Caco-2 (cell line): ENCODE measurements at regions of chr17 and their contacts with region 1.

Region 1: DNA sequence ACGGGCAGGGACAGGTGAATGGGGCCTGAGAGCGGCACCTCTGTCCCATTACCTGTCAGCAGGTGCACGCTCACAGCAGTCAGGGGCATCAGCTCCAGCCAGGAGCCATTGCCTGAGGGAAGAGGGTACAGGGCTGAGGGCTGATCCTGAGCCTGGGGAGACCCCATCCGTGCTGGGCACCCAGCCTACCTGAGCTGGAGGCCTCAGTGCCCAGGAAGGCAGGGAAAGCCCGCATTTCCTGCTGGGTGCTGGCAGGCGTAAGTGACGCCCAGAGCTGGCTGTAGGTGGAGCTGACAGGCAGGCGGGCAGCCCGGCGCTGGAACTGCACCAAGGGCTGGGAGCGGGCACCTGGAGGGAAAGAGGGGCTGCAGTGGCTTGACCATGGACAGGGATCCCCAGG is 7.4 kb downstream of the FAM171A2 start:
- DNase-seq: no peak
- H3K4me3 ChIP-seq: no peak overlapping the region
- H3K4me3 Mint-ChIP-seq: no peak overlapping the region
- H3K27ac Mint-ChIP-seq: no peak overlapping the region
- H3K4me1 ChIP-seq: peaks cover 6% of the 10 kb centered on the region; the same call in 1 of the 2 replicates
- H3K4me1 Mint-ChIP-seq: peaks cover 11% of the 10 kb centered on the region
- H3K27me3 ChIP-seq: no peaks in the 10 kb centered on the region
- H3K27me3 Mint-ChIP-seq: no peaks in the 10 kb centered on the region
- CTCF ChIP-seq: no peak

Region 2: DNA sequence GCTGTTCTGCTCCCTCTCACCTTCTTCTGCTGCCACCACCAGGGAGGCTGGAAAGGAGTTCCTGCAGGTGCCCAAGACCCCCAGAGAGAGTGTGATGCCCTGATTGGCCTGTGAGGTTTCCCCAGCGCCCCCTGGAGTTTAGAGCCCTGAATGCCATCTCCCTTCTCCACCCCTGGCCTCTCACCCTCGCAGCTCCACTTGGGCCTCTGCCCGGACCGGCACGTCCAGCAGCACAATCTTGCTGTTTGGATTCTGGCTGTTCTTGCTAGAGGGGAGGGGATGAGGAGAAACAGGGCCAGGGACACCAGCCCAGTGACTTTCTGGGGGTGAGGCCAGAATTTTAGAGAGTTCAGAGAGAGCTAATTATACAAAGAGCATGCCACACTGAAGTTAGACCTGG is 19.9 kb after region 1 on chr17:
- CTCF ChIA-PET with region 1: interaction called, 11 read pairs
- POLR2A ChIA-PET with region 1: no interaction called
- intact Hi-C with region 1: no loop called
- DNase-seq: peak in 1 of 2 experiments; percentile 39
- H3K4me3 ChIP-seq: no peak overlapping the region
- H3K4me3 Mint-ChIP-seq: no peak overlapping the region
- H3K27ac Mint-ChIP-seq: no peak overlapping the region
- H3K4me1 ChIP-seq: no peaks in the 10 kb centered on the region
- H3K4me1 Mint-ChIP-seq: no peaks in the 10 kb centered on the region
- H3K27me3 ChIP-seq: no peaks in the 10 kb centered on the region
- H3K27me3 Mint-ChIP-seq: peaks cover 4% of the 10 kb centered on the region
- CTCF ChIP-seq: peak; percentile 45 to 55

Region 3: GRCh38 chr17:44394833-44395232 is 38.6 kb after region 1 on chr17:
- CTCF ChIA-PET with region 1: no interaction called
- POLR2A ChIA-PET with region 1: no interaction called
- intact Hi-C with region 1: no loop called
- DNase-seq: no peak
- H3K4me3 ChIP-seq: no peak overlapping the region
- H3K4me3 Mint-ChIP-seq: no peak overlapping the region
- H3K27ac Mint-ChIP-seq: no peak overlapping the region
- H3K4me1 ChIP-seq: 0 out of 2 replicates have a peak, but pooled peaks cover 4% of the 10 kb centered on the region
- H3K4me1 Mint-ChIP-seq: no peaks in the 10 kb centered on the region
- H3K27me3 ChIP-seq: no peaks in the 10 kb centered on the region
- H3K27me3 Mint-ChIP-seq: no peaks in the 10 kb centered on the region
- CTCF ChIP-seq: no peak